ENCODE measurements at regions of chr3 and their contacts with region 1.

Region 1: DNA sequence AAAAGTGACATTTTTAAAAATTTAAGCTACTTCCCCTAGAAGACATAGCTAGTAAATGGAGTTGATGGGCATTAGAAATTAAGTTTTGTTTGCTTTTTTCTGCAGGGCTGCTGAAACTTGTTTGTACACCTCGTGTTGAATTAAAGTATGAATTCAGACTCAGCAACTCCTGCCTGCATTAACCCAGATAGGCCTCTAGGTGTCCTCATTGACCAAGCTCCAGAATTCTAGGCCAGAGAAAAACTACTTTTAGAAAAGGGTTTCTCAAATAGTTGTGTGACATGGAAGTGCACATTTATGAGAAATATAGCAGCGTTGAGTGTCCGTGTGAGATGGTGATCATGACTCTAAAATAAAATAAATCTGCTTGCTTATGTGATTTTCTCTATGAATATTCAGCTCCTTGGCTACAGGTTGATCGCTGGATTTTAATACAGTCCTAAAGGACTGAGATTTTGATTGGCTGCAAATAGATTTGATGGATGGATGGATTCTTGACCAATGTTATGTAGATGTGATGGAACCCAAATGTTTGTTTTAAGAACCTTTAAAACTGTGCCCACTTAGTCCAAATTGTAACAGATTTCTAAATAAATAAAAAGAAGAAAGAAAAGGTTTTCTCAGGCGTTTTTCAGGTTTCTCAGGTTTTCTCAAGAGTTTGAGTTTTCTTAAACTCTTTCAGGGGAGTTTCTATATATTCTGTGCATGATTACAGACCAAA is 39.4 kb upstream of the LMOD3 start:
- DNase-seq: no peak
- H3K4me3 ChIP-seq: no peak overlapping the region
- H3K27ac ChIP-seq: no peak overlapping the region
- H3K4me1 ChIP-seq: peaks cover 0 to 7% (median 0%) of the 10 kb centered on the region in 6 donors
- H3K27me3 ChIP-seq: no peaks in the 10 kb centered on the region
- CTCF ChIP-seq: peak; percentile 78 to 95 (median 88)
- POLR2A ChIP-seq: no peak

Region 2: DNA sequence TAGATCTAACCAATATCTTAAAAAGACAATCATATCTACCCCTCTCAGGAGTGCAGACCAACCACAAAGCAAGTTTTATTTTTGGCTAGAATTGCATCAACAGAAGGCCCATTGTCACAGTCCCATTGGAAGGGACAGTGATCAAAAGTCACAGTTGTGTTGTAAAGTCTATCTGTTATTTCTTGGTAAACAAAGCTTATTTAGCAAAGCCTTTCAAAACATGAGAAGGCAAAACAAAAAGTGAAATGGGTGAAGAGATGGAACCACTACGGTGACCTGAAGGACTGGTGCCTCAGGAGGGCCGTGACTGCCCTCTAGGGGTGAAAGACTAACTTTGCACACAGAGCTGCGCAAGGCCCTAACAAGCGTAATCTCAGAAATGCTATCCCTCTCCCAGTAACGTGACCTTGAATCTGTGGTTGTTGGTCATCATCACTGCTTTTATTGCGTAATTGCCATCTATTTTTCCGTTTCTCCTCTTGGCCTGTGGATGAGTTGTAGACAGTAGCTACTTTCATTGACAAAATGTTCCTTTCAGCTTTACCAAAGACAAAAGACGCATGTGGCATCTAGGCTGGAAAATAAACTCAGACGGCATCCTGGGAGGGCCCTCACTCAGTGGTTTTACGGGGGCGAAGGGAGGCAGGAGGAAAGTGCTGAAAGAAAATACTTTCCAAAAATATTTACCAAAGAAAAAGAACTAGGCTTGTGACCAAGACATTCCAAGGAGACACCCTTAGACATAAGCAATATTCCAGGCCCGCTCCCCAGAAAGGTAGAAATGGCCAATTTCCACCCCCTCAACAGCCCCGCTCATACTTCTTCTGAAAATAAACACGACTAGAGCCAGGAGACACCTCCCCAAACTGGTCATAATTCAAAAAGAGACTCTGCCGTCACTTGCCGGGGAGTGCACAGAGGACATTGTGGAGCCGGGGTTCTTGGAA is 144.8 kb after region 1 on chr3:
- intact Hi-C with region 1: loop called (anchors 5 kb)
- DNase-seq: peak; percentile 87
- H3K4me3 ChIP-seq: no peak overlapping the region
- H3K27ac ChIP-seq: peak overlapping the region in 5 of 8 donors; percentile 33 to 62 (median 40)
- H3K4me1 ChIP-seq: peaks cover 0 to 13% (median 8%) of the 10 kb centered on the region in 6 donors
- H3K27me3 ChIP-seq: no peaks in the 10 kb centered on the region
- CTCF ChIP-seq: peak; percentile 76 to 95 (median 88)
- POLR2A ChIP-seq: no peak

Region 3: DNA sequence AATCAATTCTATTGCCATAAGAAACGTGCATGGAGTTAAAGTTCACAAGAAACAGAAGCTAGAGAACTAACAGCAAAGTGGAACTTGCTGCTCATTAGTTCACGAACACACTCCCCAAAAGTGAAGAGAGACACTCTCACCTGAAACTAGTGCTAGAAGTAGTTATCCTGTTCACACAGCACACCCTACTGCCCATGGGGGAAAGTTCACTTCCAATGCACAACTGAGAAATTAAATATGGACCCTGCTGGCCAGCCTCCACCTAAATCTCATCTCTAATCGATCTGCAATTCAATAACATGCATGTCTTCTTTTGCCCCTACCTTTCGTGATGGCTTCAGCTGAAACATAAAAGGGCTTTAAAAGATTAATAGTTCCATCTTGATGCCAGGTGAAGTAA is 263.5 kb after region 1 on chr3:
- intact Hi-C with region 1: loop called (anchors 10 kb)
- DNase-seq: no peak
- H3K4me3 ChIP-seq: no peak overlapping the region
- H3K27ac ChIP-seq: no peak overlapping the region
- H3K4me1 ChIP-seq: peaks cover 4 to 20% (median 13%) of the 10 kb centered on the region in 6 donors
- H3K27me3 ChIP-seq: no peaks in the 10 kb centered on the region
- CTCF ChIP-seq: peak in 10 of 11 experiments; percentile 18 to 58 (median 55)
- POLR2A ChIP-seq: no peak

Region 4: DNA sequence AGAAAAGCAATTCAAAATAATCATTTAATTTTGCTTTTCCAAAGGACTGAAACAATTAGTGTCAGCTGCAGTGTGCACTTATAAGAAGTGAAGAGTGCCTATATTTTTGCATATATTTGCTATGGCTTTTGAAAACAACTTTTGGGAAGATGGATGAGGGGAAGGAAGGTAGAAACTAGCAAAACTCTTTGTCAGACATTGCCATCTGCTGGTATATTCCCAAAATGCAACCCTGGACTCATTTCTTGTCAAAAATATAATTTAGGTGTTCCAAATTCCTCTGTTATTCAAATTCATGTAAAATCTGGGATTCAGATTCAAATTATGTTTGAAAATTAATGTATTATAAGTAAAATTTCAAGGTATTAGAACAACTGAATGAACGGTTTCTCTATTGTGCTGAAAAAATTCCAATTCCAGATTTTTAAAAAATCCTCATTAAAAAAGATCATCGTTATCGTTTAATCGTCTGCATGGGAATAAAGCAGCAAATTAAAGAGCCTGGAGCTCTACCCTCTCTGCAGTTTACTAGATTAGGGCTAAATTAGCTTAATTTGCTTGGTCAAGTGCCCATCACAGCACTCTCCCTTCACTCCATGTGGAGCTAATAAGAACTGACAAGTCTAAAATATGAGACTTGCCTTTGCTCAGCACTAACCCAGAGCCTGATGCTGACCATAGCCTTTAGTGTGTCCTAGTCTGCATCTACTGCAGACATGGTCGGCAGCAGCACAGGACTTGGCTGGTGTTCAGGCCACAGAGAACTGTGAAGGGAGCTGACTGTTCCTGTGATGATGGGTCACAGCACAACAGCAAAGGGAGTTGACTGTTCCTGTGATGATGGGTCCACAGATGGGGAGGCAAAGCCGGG is 509.6 kb after region 1 on chr3:
- intact Hi-C with region 1: loop called (anchors 5 kb)
- DNase-seq: no peak
- H3K4me3 ChIP-seq: no peak overlapping the region
- H3K27ac ChIP-seq: no peak overlapping the region
- H3K4me1 ChIP-seq: peaks cover 0 to 4% (median 0%) of the 10 kb centered on the region in 6 donors
- H3K27me3 ChIP-seq: no peaks in the 10 kb centered on the region
- CTCF ChIP-seq: peak; percentile 31 to 78 (median 65)
- POLR2A ChIP-seq: no peak